Activated CD4-positive, alpha-beta T cell treated with anti-CD3 and anti-CD28 coated beads for 36 hours (primary cell): ENCODE measurements at regions of chr12 and their contacts with region 1.

Region 1: GRCh38 chr12:89524541-89525285 is at the start of gene GALNT4:
- DNase-seq: peak; percentile 84
- ATAC-seq: peak; percentile 64
- H3K4me3 Mint-ChIP-seq: peak within 1 kb of the TSS; percentile 81
- H3K27ac Mint-ChIP-seq: peak within 1 kb of the TSS; percentile 94
- H3K4me1 Mint-ChIP-seq: peaks cover 53% of the 10 kb centered on the region
- H3K27me3 Mint-ChIP-seq: no peaks in the 10 kb centered on the region
- total RNA-seq, gene GALNT4: 3.0 to 4.6 TPM

Region 2: GRCh38 chr12:89051065-89051677 is 473.5 kb before region 1 on chr12:
- CTCF ChIA-PET with region 1: interaction called, 4 read pairs
- POLR2A ChIA-PET with region 1: no interaction called
- intact Hi-C with region 1: loop called (anchors 1 kb)
- DNase-seq: peak; percentile 22
- ATAC-seq: peak; percentile 74
- H3K4me3 Mint-ChIP-seq: no peak overlapping the region
- H3K27ac Mint-ChIP-seq: peak overlapping the region; percentile 62
- H3K4me1 Mint-ChIP-seq: peaks cover 19% of the 10 kb centered on the region
- H3K27me3 Mint-ChIP-seq: no peaks in the 10 kb centered on the region

Region 3: GRCh38 chr12:89135976-89136634 is 388.6 kb before region 1 on chr12:
- CTCF ChIA-PET with region 1: no interaction called
- POLR2A ChIA-PET with region 1: no interaction called
- intact Hi-C with region 1: no loop called
- DNase-seq: peak; percentile 10
- ATAC-seq: peak; percentile 60
- H3K4me3 Mint-ChIP-seq: no peak overlapping the region
- H3K27ac Mint-ChIP-seq: no peak overlapping the region
- H3K4me1 Mint-ChIP-seq: peaks cover 30% of the 10 kb centered on the region
- H3K27me3 Mint-ChIP-seq: peaks cover 8% of the 10 kb centered on the region

Region 4: GRCh38 chr12:89244536-89244935 is 280.2 kb before region 1 on chr12:
- CTCF ChIA-PET with region 1: interaction called, 3 read pairs
- POLR2A ChIA-PET with region 1: no interaction called
- intact Hi-C with region 1: loop called in 1 of 2 experiments (anchors 5 kb)
- DNase-seq: peak; percentile 48
- ATAC-seq: peak; percentile 88
- H3K4me3 Mint-ChIP-seq: peak overlapping the region; percentile 27
- H3K27ac Mint-ChIP-seq: peak overlapping the region; percentile 84
- H3K4me1 Mint-ChIP-seq: peaks cover 38% of the 10 kb centered on the region
- H3K27me3 Mint-ChIP-seq: no peaks in the 10 kb centered on the region

Region 5: DNA sequence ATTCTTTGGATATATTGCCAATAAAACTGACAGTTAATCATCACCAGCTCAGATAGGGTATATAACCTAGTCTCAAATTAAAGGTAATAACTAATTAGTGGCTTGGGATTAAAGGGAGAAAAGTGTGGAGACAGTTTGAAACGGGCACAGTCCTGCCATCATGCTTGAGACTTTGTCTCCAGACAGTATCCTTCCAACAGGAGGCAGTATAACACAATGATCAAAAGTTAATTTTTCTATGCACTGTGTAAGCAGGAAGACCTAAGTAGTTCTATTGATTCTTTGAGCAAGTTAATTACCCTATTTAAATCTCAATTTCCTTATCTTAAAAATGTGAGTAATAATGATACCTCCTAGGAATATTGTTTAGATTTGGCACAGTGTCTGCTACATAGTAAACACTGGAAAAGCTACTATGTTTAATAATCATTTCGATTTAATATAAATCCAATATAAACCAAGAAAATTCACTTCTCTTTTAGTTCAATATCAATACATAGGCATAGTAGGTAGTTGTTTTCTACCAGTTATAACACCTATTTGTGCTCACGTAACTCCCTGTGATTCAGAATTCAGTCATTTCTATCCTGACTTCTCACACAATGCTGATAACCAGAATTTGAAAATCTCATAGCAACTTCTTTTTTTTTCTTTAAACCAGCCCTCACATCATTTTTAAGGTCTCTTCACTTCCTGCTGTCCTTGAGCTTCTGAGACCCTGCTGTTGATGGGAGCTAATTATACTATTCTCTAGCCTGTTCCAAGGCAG is 53.8 kb before region 1 on chr12:
- CTCF ChIA-PET with region 1: interaction called, 45 read pairs
- POLR2A ChIA-PET with region 1: no interaction called
- intact Hi-C with region 1: loop called (anchors 1 kb)
- DNase-seq: peak; percentile 14
- ATAC-seq: peak; percentile 57
- H3K4me3 Mint-ChIP-seq: no peak overlapping the region
- H3K27ac Mint-ChIP-seq: peak overlapping the region; percentile 69
- H3K4me1 Mint-ChIP-seq: peaks cover 57% of the 10 kb centered on the region
- H3K27me3 Mint-ChIP-seq: no peaks in the 10 kb centered on the region

Region 6: DNA sequence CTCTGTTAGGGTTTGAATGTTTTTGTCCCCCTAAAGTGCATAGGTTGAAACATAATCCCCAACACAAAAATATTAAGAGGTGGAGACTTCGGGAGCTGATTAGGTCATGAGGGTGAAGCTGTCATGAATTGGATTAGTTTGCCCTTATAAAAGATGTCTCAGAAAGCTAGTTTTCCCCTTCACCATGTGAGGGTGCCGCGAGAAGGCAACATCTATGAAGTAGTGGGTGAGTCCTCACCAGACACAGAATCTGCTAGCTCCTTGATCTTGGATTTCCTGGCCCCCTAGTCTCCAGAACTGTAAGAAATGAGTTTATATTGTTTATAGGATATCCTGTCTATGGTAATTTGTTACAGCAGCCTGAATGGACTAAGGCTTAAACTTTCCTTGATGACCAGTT is 485.4 kb after region 1 on chr12:
- CTCF ChIA-PET with region 1: no interaction called
- POLR2A ChIA-PET with region 1: no interaction called
- intact Hi-C with region 1: no loop called
- DNase-seq: no peak
- ATAC-seq: no peak
- H3K4me3 Mint-ChIP-seq: no peak overlapping the region
- H3K27ac Mint-ChIP-seq: no peak overlapping the region
- H3K4me1 Mint-ChIP-seq: no peaks in the 10 kb centered on the region
- H3K27me3 Mint-ChIP-seq: no peaks in the 10 kb centered on the region